B cell (primary cell): ENCODE measurements at regions of chr5 and their contacts with region 1.

Region 1: DNA sequence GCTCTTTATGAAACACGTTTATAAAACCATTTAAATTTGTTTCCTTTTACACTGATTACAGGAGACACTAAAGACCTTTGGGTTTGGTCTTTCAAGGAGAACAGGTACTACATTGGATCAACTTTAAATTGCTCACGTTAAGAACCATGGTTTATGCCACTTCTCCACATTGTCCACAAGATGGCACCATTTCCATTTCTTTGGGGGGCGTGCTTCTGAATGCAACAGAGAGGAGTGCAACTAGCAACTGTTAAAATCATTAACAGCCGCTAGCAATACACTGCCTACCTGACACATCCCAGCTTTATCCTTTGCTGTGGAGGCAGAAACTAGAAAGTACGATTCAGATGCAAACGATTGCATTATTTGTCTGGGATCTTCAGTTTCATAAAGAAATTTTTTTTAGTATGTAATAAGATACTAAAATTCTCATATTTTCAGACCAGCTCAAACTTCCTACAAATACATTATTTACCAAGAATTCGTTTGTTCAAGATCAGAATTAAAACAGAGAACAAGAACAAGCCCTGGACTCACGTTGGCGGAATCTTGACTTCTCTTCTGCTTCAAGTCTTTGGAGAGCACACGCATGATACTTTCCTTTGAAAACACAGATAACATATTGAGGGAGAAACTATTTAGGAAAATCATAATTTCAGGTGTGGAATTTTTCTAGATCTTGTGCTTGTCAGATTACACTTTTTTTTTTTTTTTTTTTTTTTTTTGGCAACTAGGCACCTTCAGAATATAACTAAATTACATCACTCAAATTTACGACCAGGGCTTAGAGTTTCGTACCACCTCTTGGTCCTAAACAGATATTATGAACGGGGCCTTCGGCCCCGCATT is 702 bp downstream of the CDC20B start:
- DNase-seq: peak; percentile 87
- ATAC-seq: peak; percentile 55
- H3K4me3 ChIP-seq: peak overlapping the region; percentile 44 to 77 (median 57)
- H3K4me3 Mint-ChIP-seq: peak overlapping the region; percentile 91
- H3K27ac ChIP-seq: no peak overlapping the region
- H3K27ac Mint-ChIP-seq: peak overlapping the region; percentile 29
- H3K4me1 ChIP-seq: peaks cover 33% of the 10 kb centered on the region in 2 donors
- H3K4me1 Mint-ChIP-seq: peaks cover 31% of the 10 kb centered on the region
- H3K27me3 ChIP-seq: peaks cover 3 to 51% (median 39%) of the 10 kb centered on the region in 4 experiments
- H3K27me3 Mint-ChIP-seq: peaks cover 57% of the 10 kb centered on the region
- CTCF ChIP-seq: peak; percentile 89

Region 2: DNA sequence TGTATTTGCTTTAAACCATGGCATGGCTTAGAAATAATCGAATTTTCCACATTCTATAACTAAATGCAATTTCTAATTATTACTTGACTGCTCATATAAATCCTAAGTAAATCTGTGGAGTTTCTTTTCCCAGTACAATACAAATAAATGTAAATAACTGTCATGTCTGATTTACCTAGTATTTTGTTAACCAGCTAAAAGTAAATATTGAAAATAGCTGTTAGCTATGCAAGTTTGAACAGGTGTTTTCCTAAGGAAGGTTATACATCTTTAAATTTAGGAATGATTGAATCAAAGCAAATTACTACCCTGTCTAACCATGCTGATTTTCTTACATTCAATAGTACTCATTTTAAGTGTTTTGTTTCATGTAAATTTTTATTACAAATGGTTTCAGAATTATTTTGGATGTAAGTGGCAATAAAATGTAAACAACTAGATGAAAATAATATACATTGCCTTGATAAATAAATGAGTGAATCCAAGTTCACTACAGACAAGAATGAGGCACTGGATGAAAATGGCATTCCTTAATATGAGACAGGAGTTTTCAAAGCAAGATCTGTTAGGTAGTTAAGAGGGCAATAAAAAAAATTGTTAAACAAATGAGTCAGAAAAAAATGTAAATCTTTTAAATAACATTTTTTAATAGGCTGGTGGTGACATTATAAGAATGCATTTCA is 39.0 kb after region 1 on chr5:
- CTCF ChIA-PET with region 1: no interaction called
- POLR2A ChIA-PET with region 1: no interaction called
- intact Hi-C with region 1: no loop called
- DNase-seq: no peak
- ATAC-seq: no peak
- H3K4me3 ChIP-seq: no peak overlapping the region
- H3K4me3 Mint-ChIP-seq: no peak overlapping the region
- H3K27ac ChIP-seq: no peak overlapping the region
- H3K27ac Mint-ChIP-seq: no peak overlapping the region
- H3K4me1 ChIP-seq: no peaks in the 10 kb centered on the region
- H3K4me1 Mint-ChIP-seq: no peaks in the 10 kb centered on the region
- H3K27me3 ChIP-seq: peaks cover 0 to 5% (median 4%) of the 10 kb centered on the region in 4 experiments
- H3K27me3 Mint-ChIP-seq: peaks cover 18% of the 10 kb centered on the region
- CTCF ChIP-seq: no peak

Region 3: DNA sequence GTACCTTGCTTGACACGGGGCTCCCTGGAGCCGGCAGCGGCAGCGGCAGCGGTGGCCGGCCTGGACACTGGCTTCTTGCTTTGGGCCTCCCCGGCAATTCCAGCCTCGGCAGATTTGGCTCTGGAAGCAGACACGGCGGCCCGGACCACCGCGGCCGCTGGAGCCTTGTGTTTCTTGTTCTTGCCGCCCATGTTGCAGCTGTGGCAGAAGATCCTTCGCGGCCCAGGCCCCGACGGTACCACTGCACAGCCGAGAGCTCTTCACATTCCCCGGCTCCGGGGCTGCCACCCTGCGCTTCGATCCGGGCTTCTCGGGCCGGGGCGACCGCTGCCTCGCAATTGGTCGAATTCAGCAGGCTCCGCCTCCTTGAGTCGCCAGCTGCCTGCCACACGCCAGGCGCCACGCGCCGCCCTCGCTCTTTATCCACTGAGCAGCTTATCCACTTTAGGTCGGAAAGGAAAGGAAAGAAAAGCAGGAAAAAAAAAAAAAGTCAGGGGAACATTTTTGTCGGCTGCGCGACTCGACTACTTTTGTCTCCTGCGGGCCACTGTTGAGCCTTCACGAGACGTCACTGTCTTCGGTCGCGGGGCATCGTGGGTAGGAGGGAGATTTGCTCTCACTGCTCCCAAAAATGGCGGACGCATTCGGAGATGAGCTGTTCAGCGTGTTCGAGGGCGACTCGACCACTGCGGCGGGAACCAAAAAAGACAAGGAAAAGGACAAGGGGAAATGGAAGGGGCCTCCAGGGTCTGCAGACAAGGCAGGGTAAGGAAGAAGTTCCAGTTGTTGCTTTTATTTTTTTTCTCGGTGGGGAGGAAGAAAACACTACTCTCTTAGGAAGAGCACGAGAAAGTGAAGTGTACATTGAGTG is 135.3 kb after region 1 on chr5 and contains the starts of genes DHX29 and MTREX:
- CTCF ChIA-PET with region 1: interaction called, 6 read pairs
- POLR2A ChIA-PET with region 1: no interaction called
- intact Hi-C with region 1: loop called (anchors 1 kb)
- DNase-seq: peak; percentile 93
- ATAC-seq: peak; percentile 91
- H3K4me3 ChIP-seq: peak within 1 kb of the TSS; percentile 68 to 99 (median 96)
- H3K4me3 Mint-ChIP-seq: no peak within 1 kb of the TSS
- H3K27ac ChIP-seq: peak within 1 kb of the TSS; percentile 88 to 98
- H3K27ac Mint-ChIP-seq: no peak within 1 kb of the TSS
- H3K4me1 ChIP-seq: peaks cover 45 to 46% of the 10 kb centered on the region in 2 donors
- H3K4me1 Mint-ChIP-seq: peaks cover 33% of the 10 kb centered on the region
- H3K27me3 ChIP-seq: no peaks in the 10 kb centered on the region
- H3K27me3 Mint-ChIP-seq: no peaks in the 10 kb centered on the region
- CTCF ChIP-seq: no peak
- total RNA-seq, gene DHX29: 17.9 and 18.1 TPM in 2 replicates
- total RNA-seq, gene MTREX: 91.7 and 94.0 TPM in 2 replicates

Region 4: DNA sequence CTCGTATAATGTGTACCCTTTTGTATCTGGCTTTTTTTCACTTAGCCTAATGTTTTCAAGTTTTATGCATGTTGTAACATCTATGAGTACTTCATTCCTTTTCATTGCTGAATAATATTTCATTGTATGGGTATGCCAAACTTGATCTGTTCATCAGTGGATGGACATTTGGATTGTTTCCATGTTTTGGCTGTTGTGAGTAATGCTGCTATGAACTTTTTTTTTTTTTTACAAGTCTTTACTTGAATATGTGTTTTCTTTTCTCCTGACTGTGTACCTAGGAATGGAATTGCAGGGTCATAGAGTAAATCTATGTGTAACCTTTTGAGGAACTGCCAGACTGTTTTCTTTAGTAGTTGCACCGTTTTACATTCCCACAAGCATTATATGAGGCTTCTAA is 187.9 kb after region 1 on chr5:
- CTCF ChIA-PET with region 1: no interaction called
- POLR2A ChIA-PET with region 1: no interaction called
- intact Hi-C with region 1: no loop called
- DNase-seq: no peak
- ATAC-seq: no peak
- H3K4me3 ChIP-seq: no peak overlapping the region
- H3K4me3 Mint-ChIP-seq: no peak overlapping the region
- H3K27ac ChIP-seq: no peak overlapping the region
- H3K27ac Mint-ChIP-seq: no peak overlapping the region
- H3K4me1 ChIP-seq: no peaks in the 10 kb centered on the region
- H3K4me1 Mint-ChIP-seq: peaks cover 12% of the 10 kb centered on the region
- H3K27me3 ChIP-seq: no peaks in the 10 kb centered on the region
- H3K27me3 Mint-ChIP-seq: no peaks in the 10 kb centered on the region
- CTCF ChIP-seq: no peak

Region 5: DNA sequence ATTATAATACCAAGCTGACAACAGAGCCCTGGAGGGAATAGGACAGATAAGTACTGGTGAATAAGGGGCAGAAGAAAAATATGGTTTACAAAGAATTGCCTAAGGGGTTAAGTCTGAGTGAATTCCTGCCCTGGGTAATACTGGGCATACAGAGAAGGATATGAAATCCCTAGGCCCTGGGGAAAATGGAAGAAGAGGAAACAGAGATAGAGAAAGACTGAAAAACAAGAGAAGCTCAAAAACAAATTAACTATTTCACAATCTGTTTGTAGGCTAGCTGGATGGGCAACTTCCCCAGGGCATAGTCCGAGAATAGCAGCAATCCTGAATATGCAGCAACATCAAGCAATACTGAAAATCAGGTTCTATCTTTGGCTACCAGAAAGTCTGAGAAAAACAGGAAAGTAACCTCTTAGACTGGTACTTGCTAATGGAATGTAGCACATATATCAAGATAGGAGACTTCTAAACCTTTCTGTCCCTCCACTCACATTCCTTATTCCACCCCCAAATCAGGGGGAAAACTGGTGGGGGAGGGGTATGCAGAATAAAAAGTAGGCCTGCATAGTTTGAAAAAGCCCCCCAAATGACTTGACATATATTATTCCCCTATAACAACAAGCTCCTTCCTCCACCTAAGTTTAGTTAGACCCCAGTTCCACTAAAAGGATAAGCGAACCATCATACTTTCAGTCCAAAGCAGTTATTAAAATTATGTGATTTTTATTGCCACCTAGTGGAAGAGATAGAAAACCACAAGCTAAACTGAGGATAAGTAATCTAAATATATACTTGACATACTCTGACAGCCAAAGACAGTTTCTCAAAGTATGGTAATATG is 519.2 kb after region 1 on chr5:
- CTCF ChIA-PET with region 1: interaction called, 20 read pairs
- POLR2A ChIA-PET with region 1: no interaction called
- intact Hi-C with region 1: loop called (anchors 1 kb)
- DNase-seq: peak; percentile 41
- ATAC-seq: peak; percentile 49
- H3K4me3 ChIP-seq: no peak overlapping the region
- H3K4me3 Mint-ChIP-seq: no peak overlapping the region
- H3K27ac ChIP-seq: no peak overlapping the region
- H3K27ac Mint-ChIP-seq: no peak overlapping the region
- H3K4me1 ChIP-seq: no peaks in the 10 kb centered on the region
- H3K4me1 Mint-ChIP-seq: peaks cover 5% of the 10 kb centered on the region
- H3K27me3 ChIP-seq: no peaks in the 10 kb centered on the region
- H3K27me3 Mint-ChIP-seq: no peaks in the 10 kb centered on the region
- CTCF ChIP-seq: peak; percentile 85

Region 6: DNA sequence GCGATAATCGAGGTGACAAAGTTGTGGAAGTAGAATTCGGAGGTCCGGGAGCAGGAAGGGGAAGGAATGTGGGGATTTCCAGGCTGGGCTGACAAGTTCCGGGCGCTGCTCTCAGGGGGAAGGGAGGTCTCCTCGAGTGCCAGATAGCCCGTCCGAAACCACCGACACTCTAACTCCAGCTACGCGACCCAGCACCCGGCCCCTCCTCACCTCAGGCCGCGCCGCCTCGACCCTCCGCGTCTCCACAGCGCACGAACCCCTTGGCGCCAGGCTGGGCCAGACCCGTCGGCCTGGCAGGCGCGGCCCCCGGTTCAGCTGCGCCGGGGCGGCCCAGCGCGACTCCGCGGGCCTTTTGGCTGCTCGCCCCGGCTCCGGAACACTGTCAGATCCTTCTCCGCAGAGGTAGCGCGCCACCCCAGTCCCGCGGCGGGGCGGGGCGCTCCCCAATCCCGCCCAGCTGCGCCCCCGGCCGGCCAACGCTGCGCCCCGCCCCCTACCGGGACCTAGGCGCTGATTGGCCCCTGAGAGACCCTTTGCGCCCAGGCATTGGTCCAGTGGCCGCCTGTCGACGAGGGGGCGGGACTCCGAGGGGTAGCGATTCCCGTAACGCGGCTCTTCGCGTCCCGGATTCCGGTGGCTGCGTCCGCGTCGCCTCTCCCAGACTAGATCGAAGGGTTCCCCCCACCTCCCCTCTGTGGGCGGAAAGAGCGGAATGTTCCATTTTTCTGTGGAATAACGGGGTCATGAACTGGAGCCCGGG is 822.5 kb after region 1 on chr5 and contains the start of gene IL6ST:
- CTCF ChIA-PET with region 1: no interaction called
- POLR2A ChIA-PET with region 1: no interaction called
- intact Hi-C with region 1: loop called (anchors 5 kb)
- DNase-seq: peak; percentile 96
- ATAC-seq: peak; percentile 94
- H3K4me3 ChIP-seq: peak within 1 kb of the TSS; percentile 75 to 97 (median 91)
- H3K4me3 Mint-ChIP-seq: peak within 1 kb of the TSS; percentile 89
- H3K27ac ChIP-seq: peak within 1 kb of the TSS; percentile 75 to 94
- H3K27ac Mint-ChIP-seq: peak within 1 kb of the TSS; percentile 78
- H3K4me1 ChIP-seq: peaks cover 11 to 18% of the 10 kb centered on the region in 2 donors
- H3K4me1 Mint-ChIP-seq: peaks cover 33% of the 10 kb centered on the region
- H3K27me3 ChIP-seq: no peaks in the 10 kb centered on the region
- H3K27me3 Mint-ChIP-seq: peaks cover 4% of the 10 kb centered on the region
- CTCF ChIP-seq: no peak
- total RNA-seq, gene IL6ST: 28.0 and 31.1 TPM in 2 replicates